Panc1 (cell line): ENCODE measurements at regions of chr6 and their contacts with region 1.

Region 1: DNA sequence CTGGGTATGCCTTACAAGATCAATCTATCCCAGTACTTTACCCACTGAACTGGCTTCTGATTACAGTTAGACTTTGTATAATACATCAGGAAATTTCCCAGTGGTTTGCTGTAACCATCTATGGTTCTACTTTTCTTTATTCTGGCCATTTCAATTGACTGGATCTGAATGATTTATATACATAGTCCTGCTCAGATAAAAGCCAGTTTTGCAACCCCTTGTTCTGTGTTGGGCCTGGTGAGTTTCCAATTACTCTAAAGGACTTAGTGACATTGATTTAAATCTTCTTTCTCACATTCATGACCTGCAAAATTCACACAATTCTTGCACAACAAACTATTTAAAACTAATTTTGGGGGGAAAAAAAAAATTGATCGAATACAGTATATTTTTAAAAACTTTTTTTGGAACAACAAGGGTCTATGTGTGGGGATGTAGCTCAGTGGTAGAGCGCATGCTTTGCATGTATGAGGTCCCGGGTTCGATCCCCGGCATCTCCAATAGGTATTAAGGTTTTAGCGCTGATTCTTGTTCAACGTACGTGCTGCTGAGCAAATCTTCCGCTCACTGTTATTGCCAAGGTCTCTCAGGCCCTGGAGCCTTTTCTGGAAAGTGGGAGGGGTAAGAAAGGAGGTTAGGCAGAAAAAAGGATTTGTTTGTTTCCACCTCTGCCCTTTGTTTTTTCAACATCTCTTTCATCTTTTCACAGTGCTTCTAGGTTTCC is 117.5 kb downstream of the GPX5 start:
- DNase-seq: peak; percentile 90
- ATAC-seq: peak; percentile 97
- H3K4me3 ChIP-seq: peak overlapping the region; percentile 41 to 50
- H3K27ac ChIP-seq: no peak overlapping the region; the same call in 1 of the 2 replicates
- H3K4me1 ChIP-seq: peaks cover 8% of the 10 kb centered on the region
- H3K27me3 ChIP-seq: no peaks in the 10 kb centered on the region
- CTCF ChIP-seq: no peak

Region 2: DNA sequence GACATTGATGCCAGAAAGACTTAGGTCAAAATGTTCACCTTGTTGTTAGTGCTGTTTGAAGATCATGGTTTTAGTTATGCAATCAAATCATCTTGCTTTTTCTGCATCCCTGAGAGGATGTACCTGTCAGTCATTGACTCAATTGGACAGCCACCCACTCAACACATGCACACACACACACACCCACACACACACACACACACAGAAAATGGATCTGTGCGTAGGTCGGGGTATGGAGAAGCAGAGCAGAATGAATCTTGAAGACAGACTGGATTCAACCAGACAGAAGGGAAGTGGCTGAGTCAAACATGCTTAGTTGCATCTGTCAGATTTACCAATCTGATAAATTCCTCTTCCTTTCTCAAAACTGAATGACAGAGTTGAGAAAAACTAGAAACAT is 180.8 kb before region 1 on chr6:
- CTCF ChIA-PET with region 1: interaction called, 10 read pairs
- POLR2A ChIA-PET with region 1: no interaction called
- in situ Hi-C with region 1: no loop called
- intact Hi-C with region 1: no loop called
- DNase-seq: no peak
- ATAC-seq: no peak
- H3K4me3 ChIP-seq: no peak overlapping the region
- H3K27ac ChIP-seq: no peak overlapping the region
- H3K4me1 ChIP-seq: no peaks in the 10 kb centered on the region
- H3K27me3 ChIP-seq: peaks cover 15% of the 10 kb centered on the region
- CTCF ChIP-seq: no peak

Region 3: GRCh38 chr6:28606424-28607400 is 36.5 kb before region 1 on chr6:
- CTCF ChIA-PET with region 1: no interaction called
- POLR2A ChIA-PET with region 1: no interaction called
- in situ Hi-C with region 1: no loop called
- intact Hi-C with region 1: loop called (anchors 5 kb)
- DNase-seq: peak; percentile 81
- ATAC-seq: peak; percentile 99
- H3K4me3 ChIP-seq: peak overlapping the region; percentile 65 to 74
- H3K27ac ChIP-seq: peak overlapping the region; percentile 67; the same call in 1 of the 2 replicates
- H3K4me1 ChIP-seq: peaks cover 11% of the 10 kb centered on the region
- H3K27me3 ChIP-seq: peaks cover 3% of the 10 kb centered on the region; the same call in 1 of the 2 replicates
- CTCF ChIP-seq: peak; percentile 58

Region 4: GRCh38 chr6:28809947-28810658 is 166.9 kb after region 1 on chr6:
- CTCF ChIA-PET with region 1: interaction called, 12 read pairs
- POLR2A ChIA-PET with region 1: no interaction called
- in situ Hi-C with region 1: no loop called
- intact Hi-C with region 1: no loop called
- DNase-seq: no peak
- ATAC-seq: peak; percentile 65
- H3K4me3 ChIP-seq: peak overlapping the region; percentile 59 to 97
- H3K27ac ChIP-seq: no peak overlapping the region
- H3K4me1 ChIP-seq: peaks cover 15% of the 10 kb centered on the region
- H3K27me3 ChIP-seq: no peaks in the 10 kb centered on the region; the same call in 1 of the 2 replicates
- CTCF ChIP-seq: peak; percentile 85

Region 5: GRCh38 chr6:28880894-28881780 is 238.0 kb after region 1 on chr6:
- CTCF ChIA-PET with region 1: no interaction called
- POLR2A ChIA-PET with region 1: no interaction called
- in situ Hi-C with region 1: no loop called
- intact Hi-C with region 1: no loop called
- DNase-seq: no peak
- ATAC-seq: peak; percentile 87
- H3K4me3 ChIP-seq: peak overlapping the region; percentile 55 to 83
- H3K27ac ChIP-seq: peak overlapping the region; percentile 41
- H3K4me1 ChIP-seq: peaks cover 5% of the 10 kb centered on the region; the same call in 1 of the 2 replicates
- H3K27me3 ChIP-seq: no peaks in the 10 kb centered on the region; the same call in 1 of the 2 replicates
- CTCF ChIP-seq: no peak